ENCODE measurements at regions of chr11 and their contacts with region 1.

Region 1: DNA sequence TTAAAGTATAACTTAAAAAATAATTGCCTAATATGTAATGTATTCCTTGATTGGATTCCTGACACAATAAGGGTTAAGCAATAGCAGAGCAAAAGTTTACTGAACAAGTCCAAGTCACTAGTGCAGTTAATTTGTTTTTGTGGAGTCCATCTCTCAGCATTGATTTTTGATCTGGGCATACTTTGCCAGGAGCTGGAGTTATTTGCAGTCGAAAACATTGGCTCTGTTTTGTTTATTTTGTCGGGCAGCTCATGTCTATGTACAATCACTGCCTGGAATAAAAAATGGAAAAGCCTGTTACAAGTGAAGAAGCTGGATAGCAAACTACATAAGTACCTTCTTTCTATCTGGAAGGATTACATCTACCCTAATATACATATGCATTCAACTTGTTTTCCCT is 625.2 kb downstream of the CNTN5 start:
- DNase-seq: no peak
- H3K4me3 ChIP-seq: no peak overlapping the region
- H3K27ac ChIP-seq: no peak overlapping the region
- H3K4me1 ChIP-seq: no peaks in the 10 kb centered on the region
- H3K27me3 ChIP-seq: no peaks in the 10 kb centered on the region
- CTCF ChIP-seq: no peak
- EP300 ChIP-seq: no peak
- POLR2A ChIP-seq: no peak

Region 2: GRCh38 chr11:98507208-98507607 is 1138.7 kb before region 1 on chr11:
- in situ Hi-C with region 1: no loop called
- intact Hi-C with region 1: loop called (anchors 5 kb)
- DNase-seq: no peak
- H3K4me3 ChIP-seq: no peak overlapping the region
- H3K27ac ChIP-seq: no peak overlapping the region
- H3K4me1 ChIP-seq: no peaks in the 10 kb centered on the region
- H3K27me3 ChIP-seq: no peaks in the 10 kb centered on the region
- CTCF ChIP-seq: no peak
- EP300 ChIP-seq: no peak
- POLR2A ChIP-seq: no peak

Measured in transverse colon (tissue), 4 donors.